Kidney (tissue), 22 donors: ENCODE measurements at regions of chr11 and their contacts with region 1.

Region 1: DNA sequence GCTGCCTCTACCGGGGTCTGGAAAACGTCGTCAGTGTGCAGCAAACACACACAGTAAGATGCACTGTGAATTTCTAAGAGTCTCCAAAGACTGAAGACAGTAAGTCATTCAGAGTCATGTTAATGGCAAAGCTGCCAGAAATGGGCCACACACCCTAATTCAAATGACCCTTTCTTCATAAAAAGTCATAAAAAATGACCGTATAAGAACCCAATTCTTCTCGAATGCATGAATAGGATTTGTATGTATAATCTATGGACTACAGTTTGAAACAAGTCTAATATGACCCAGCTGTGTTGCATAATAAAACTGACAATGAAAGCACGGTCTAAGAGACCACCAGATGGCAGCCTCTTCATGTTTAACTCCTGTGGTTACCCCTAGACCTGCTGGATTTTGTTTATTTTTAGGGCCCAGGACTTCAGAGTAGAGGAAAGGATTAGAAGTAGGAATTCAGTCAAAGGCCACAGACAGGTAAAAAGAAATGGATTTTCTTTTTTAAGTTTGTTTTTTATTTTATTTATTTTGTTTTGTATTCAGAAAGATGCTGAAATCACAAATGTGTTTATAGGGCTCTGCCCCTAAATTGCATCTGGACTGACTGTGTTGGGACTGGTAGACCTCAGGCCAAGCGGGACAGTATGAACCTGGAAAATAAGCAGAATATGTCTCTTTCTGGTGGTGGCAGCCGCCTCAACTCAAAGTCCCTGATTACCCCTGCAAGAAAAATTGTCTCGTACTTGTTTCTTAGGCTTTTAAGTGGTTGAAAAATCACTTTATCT is 32.1 kb upstream of the SLC5A12 start:
- DNase-seq: peak in 3 of 5 donors; percentile 56 to 90 (median 79)
- H3K4me3 ChIP-seq: no peak overlapping the region
- H3K27ac ChIP-seq: no peak overlapping the region
- H3K4me1 ChIP-seq: no peaks in the 10 kb centered on the region
- H3K27me3 ChIP-seq: no peaks in the 10 kb centered on the region
- CTCF ChIP-seq: peak; percentile 72

Region 2: DNA sequence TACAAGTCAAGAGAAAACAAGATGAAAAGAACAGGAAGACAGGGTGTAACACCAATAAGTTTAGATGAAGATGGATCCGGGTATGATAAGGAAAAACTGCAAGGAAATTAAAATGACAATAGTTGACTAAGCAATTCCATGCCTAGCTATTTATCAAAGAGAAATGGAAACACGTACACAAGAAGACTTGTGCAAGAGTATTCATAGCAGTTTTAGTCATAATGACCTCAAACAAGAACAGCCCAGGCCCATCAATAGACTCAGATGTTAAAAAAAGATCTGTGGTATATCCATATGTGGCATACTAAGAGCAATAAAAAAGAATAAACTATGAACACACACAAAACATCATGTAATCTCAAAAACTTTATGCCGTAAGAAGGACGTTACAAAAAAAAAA is 65.2 kb before region 1 on chr11:
- intact Hi-C with region 1: no loop called
- DNase-seq: no peak
- H3K4me3 ChIP-seq: no peak overlapping the region
- H3K27ac ChIP-seq: no peak overlapping the region
- H3K4me1 ChIP-seq: no peaks in the 10 kb centered on the region
- H3K27me3 ChIP-seq: no peaks in the 10 kb centered on the region
- CTCF ChIP-seq: no peak

Region 3: GRCh38 chr11:27158722-27159679 is 405.1 kb after region 1 on chr11:
- intact Hi-C with region 1: loop called (anchors 10 kb)
- DNase-seq: peak in 4 of 5 donors; percentile 55 to 88 (median 70)
- H3K4me3 ChIP-seq: no peak overlapping the region
- H3K27ac ChIP-seq: no peak overlapping the region
- H3K4me1 ChIP-seq: peaks cover 0 to 10% (median 4%) of the 10 kb centered on the region in 3 donors
- H3K27me3 ChIP-seq: no peaks in the 10 kb centered on the region
- CTCF ChIP-seq: peak; percentile 87